Breast epithelium (tissue), 4 donors: ENCODE measurements at regions of chr14 and their contacts with region 1.

Region 1: GRCh38 chr14:24806061-24806678 is 172.2 kb upstream of the GZMB start:
- DNase-seq: peak; percentile 67 to 72
- H3K4me3 ChIP-seq: no peak overlapping the region
- H3K27ac ChIP-seq: peak overlapping the region; percentile 29 to 46
- H3K4me1 ChIP-seq: no peaks in the 10 kb centered on the region
- H3K27me3 ChIP-seq: no peaks in the 10 kb centered on the region
- CTCF ChIP-seq: peak; percentile 65 to 77 (median 73)
- POLR2A ChIP-seq: no peak

Region 2: DNA sequence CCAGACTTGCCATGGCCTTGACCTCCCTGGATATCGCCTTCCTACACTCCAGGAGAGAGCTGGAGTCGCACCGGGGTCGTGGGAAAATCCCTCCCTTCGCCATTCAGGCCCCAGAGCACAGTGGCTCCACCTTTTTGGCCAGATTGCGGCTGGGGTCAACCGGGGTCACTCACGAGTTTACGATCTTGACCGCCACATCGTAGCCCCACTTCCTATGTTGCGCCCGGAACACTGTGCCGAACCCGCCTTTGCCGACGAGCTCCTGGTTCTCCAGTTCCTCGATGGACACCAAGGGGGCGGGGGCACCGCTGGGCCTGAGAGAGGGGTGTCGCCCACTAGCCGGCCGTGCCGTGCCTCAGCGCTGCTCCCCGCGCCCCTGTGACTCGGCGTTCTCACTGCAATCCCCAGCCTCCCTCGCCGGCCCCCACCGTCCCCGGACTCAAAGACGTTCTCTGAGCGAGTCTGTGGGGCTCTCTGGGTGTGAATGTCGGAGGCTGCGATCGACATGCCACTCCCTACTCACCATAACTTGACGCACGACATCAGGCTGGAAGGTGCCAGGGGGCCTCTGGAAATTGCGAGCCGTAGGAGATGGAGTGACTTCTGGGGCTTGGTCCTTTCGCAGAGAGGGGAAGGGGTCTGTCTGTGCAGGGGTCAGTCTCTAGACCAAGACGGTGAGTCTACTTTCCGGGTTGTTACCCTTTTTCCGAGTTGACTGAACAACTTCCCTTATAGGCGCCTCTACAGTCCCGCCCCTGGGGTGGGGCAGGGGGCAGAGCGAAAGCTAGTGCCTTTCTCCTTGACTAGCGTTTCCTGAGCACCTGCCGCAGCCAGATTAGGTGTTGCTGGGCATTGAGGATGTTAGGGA is 466.7 kb before region 1 on chr14 and contains the start of gene RIPK3:
- intact Hi-C with region 1: no loop called
- DNase-seq: no peak
- H3K4me3 ChIP-seq: peak within 1 kb of the TSS; percentile 47 to 66 (median 52)
- H3K27ac ChIP-seq: peak within 1 kb of the TSS in 1 of 2 donors; percentile 48
- H3K4me1 ChIP-seq: no peaks in the 10 kb centered on the region
- H3K27me3 ChIP-seq: peaks cover 0 to 9% of the 10 kb centered on the region in 2 donors
- CTCF ChIP-seq: no peak
- POLR2A ChIP-seq: no peak
- total RNA-seq, gene RIPK3: 10.7 to 13.4 (median 12.0) TPM

Region 3: DNA sequence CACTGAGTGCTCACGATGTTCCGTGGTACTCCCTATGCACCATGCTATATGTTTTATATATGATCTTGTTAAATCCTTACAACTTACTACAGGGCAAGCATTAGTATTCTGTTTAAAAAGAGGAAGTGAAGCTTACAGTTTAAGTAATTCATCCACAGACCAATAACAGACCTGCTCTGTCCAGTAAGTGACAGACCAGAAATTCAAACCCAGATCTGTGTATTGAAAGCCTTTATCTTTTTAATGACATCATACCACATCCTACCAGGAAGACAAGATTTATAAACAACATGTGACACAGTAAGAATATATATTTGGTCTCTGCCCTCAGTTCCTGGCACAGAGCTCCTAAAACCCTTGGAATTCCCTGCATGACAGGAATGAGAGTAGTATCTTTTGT is 37.3 kb after region 1 on chr14:
- intact Hi-C with region 1: no loop called
- DNase-seq: no peak
- H3K4me3 ChIP-seq: no peak overlapping the region
- H3K27ac ChIP-seq: no peak overlapping the region
- H3K4me1 ChIP-seq: no peaks in the 10 kb centered on the region
- H3K27me3 ChIP-seq: no peaks in the 10 kb centered on the region
- CTCF ChIP-seq: no peak
- POLR2A ChIP-seq: no peak

Region 4: DNA sequence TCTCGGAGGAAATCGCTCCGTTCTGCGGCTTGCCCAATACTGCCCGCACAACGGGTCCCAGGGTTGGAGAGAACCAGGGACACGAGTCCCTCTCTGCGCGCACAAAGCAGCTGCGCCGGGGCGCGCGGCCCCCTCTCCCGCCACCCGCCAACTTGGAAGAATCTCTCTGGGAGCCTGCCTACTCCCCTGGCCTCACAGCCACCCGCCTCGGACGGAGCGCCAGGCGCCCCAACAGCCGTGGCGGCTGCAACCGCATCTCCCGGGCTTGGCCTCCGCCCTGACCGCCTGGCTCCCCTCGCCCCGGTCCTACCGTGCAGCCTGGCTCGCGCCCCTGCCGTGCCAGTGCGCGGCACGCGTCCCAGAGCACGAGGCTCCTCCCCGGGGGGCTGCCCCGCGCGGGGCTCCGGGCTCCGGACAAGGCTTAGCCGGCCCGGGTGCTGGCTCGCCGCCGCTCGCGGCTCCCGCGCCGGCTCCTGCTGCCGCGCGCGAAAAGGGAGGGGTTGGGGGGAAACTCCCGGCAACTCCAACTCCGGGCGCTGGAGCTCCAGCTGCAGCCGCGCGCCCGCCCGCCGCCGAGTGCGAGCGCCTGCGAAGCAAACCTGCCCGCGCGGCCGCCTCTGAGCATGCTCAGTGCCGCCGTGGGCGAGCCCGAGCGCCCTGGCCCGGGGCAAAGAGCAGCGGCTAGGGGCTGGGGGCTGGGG is 243.5 kb after region 1 on chr14 and contains the start of gene STXBP6:
- intact Hi-C with region 1: loop called (anchors 10 kb)
- DNase-seq: no peak
- H3K4me3 ChIP-seq: peak within 1 kb of the TSS; percentile 63 to 84 (median 64)
- H3K27ac ChIP-seq: peak within 1 kb of the TSS in 1 of 2 donors; percentile 30
- H3K4me1 ChIP-seq: peaks cover 0 to 8% of the 10 kb centered on the region in 2 donors
- H3K27me3 ChIP-seq: peaks cover 4 to 27% of the 10 kb centered on the region in 2 donors
- CTCF ChIP-seq: no peak
- POLR2A ChIP-seq: no peak
- total RNA-seq, gene STXBP6: 2.6 to 8.3 (median 5.3) TPM